Gastrocnemius medialis (tissue), 4 donors: ENCODE measurements at regions of chr10 and their contacts with region 1.

Region 1: DNA sequence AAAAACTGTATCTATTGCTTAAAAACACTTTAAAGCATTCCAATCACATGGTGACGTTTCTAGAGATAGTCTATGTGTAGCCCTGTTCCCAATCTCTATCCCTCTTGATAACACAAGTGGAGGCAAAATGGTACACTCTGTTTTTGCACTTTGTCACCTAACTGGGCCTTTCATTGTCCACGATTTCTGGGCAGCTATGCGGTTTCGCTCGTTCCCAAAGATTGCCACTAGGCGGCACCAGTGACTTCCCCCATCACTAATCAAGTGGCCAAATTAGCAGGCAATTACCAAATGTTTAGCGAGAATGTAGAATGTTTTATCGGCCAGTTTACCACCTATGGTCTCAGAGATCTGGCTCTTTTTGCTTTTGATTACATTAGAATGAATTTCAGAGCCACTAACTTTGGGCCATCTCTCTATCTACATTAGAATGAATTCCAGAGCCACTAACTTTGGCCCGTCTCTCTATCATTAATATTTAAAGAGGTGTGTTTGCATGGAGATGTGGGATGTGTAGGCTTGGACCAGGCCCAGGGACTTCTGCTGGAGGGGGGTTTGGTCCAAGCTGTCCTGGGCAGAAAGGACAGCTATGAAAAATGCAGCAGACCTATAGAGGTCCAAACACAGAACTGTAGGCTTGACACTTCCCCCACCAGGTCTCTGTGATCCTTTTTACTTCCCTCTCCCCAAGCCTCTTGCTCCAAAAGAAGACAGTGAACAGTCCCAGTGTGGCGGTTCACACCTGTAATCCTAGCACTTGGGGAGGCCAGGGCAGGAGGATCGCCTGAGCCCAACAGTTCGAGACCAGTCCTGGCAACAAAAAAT is 90.1 kb downstream of the EPC1 start:
- DNase-seq: peak; percentile 23 to 33
- ATAC-seq: peak; percentile 66 to 77
- H3K4me3 ChIP-seq: no peak overlapping the region
- H3K27ac ChIP-seq: no peak overlapping the region
- H3K4me1 ChIP-seq: no peaks in the 10 kb centered on the region
- H3K27me3 ChIP-seq: no peaks in the 10 kb centered on the region
- CTCF ChIP-seq: peak; percentile 77 to 88 (median 84)
- POLR2A ChIP-seq: no peak

Region 2: DNA sequence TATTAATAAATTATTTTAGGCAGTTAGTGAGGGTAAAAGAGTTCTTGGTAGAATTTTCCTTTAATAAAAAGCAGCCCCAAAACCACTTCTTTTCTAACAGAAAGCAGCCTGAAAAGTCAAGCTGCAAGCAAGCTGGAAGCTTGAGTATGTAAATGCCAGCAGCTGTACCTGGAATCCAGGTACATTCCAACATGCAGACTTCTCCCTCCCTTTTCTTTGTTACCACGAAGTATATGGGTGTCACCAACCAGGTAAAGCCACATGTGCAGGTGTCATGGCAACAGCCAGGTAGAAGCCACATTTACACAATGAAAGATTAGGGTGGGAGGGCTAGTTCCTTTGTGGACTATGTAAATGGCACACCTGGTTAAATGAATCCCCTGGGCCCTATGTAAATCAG is 24.4 kb before region 1 on chr10:
- in situ Hi-C with region 1: no loop called
- intact Hi-C with region 1: no loop called
- DNase-seq: no peak
- ATAC-seq: no peak
- H3K4me3 ChIP-seq: no peak overlapping the region
- H3K27ac ChIP-seq: no peak overlapping the region
- H3K4me1 ChIP-seq: no peaks in the 10 kb centered on the region
- H3K27me3 ChIP-seq: no peaks in the 10 kb centered on the region
- CTCF ChIP-seq: no peak
- POLR2A ChIP-seq: no peak

Region 3: GRCh38 chr10:32244421-32245207 is 12.2 kb before region 1 on chr10:
- in situ Hi-C with region 1: no loop called
- intact Hi-C with region 1: no loop called
- DNase-seq: no peak
- ATAC-seq: no peak
- H3K4me3 ChIP-seq: no peak overlapping the region
- H3K27ac ChIP-seq: no peak overlapping the region
- H3K4me1 ChIP-seq: no peaks in the 10 kb centered on the region
- H3K27me3 ChIP-seq: no peaks in the 10 kb centered on the region
- CTCF ChIP-seq: no peak
- POLR2A ChIP-seq: no peak

Region 4: DNA sequence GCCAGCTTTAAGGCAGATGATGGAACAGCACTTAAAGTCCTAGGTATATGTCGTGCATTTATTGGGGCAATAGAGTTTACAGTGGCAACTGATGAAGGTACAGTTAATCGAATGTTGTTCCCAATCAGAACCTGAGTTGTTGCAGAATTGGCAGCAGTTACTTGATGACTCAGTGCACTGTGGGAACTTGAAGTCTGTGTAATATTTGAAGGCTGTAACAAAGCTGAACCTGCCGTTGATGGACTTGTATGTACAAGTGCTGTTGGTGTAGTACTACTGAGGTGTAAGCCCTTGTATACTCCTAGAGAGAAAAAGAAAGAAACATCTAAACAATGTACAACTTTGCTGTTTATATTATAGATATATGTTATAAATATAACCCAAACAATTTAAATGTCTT is 14.8 kb after region 1 on chr10:
- in situ Hi-C with region 1: no loop called
- intact Hi-C with region 1: no loop called
- DNase-seq: no peak
- ATAC-seq: peak in 1 of 2 donors; percentile 36
- H3K4me3 ChIP-seq: no peak overlapping the region
- H3K27ac ChIP-seq: no peak overlapping the region
- H3K4me1 ChIP-seq: no peaks in the 10 kb centered on the region
- H3K27me3 ChIP-seq: no peaks in the 10 kb centered on the region
- CTCF ChIP-seq: no peak
- POLR2A ChIP-seq: no peak

Region 5: GRCh38 chr10:32338262-32338661 is 81.4 kb after region 1 on chr10:
- in situ Hi-C with region 1: loop called in 2 of 4 experiments (anchors 5 to 10 kb)
- intact Hi-C with region 1: no loop called
- DNase-seq: no peak
- ATAC-seq: no peak
- H3K4me3 ChIP-seq: peak overlapping the region in 1 of 4 donors; percentile 1
- H3K27ac ChIP-seq: peak overlapping the region in 2 of 4 donors; percentile 36 to 55
- H3K4me1 ChIP-seq: peaks cover 92 to 94% of the 10 kb centered on the region in 2 donors
- H3K27me3 ChIP-seq: no peaks in the 10 kb centered on the region
- CTCF ChIP-seq: no peak
- POLR2A ChIP-seq: no peak

Region 6: DNA sequence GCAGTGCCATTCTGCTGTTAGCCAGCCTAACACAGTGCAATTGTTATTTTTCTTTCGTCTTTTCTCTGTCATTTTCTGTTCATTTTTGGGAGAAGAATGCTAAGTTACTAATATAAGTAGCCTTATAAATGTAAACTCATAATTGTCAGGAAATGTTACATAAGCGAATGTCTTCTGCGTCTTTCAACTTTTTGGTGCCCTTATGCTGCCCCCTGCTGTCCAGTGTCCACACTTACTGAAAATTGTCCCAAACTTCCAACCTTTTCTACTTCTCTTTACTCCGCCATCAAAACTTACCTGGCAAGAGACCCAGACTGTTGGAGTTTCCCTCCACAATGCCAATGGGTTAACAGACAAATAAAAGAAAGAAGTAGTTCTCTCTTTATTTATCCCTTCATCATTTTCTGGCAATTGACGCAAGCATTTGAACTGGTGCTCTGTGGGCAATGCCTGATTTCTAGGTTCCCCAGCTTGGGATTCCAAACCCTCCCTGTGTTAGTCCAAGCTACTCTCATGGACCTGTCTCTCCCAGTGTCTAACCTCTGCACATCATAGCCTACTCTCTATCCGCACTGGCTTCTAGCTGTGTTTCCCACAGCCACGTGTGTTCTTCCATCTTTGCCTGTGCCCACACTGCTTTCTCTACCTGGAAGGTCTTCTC is 111.1 kb after region 1 on chr10:
- in situ Hi-C with region 1: loop called in 3 of 4 experiments (anchors 5 to 10 kb)
- intact Hi-C with region 1: loop called (anchors 1 kb)
- DNase-seq: peak; percentile 41 to 56
- ATAC-seq: peak; percentile 69 to 71
- H3K4me3 ChIP-seq: peak overlapping the region; percentile 23 to 40 (median 26)
- H3K27ac ChIP-seq: peak overlapping the region; percentile 43 to 88 (median 51)
- H3K4me1 ChIP-seq: peaks cover 34 to 41% of the 10 kb centered on the region in 2 donors
- H3K27me3 ChIP-seq: no peaks in the 10 kb centered on the region
- CTCF ChIP-seq: peak; percentile 76 to 82 (median 81)
- POLR2A ChIP-seq: no peak

Region 7: DNA sequence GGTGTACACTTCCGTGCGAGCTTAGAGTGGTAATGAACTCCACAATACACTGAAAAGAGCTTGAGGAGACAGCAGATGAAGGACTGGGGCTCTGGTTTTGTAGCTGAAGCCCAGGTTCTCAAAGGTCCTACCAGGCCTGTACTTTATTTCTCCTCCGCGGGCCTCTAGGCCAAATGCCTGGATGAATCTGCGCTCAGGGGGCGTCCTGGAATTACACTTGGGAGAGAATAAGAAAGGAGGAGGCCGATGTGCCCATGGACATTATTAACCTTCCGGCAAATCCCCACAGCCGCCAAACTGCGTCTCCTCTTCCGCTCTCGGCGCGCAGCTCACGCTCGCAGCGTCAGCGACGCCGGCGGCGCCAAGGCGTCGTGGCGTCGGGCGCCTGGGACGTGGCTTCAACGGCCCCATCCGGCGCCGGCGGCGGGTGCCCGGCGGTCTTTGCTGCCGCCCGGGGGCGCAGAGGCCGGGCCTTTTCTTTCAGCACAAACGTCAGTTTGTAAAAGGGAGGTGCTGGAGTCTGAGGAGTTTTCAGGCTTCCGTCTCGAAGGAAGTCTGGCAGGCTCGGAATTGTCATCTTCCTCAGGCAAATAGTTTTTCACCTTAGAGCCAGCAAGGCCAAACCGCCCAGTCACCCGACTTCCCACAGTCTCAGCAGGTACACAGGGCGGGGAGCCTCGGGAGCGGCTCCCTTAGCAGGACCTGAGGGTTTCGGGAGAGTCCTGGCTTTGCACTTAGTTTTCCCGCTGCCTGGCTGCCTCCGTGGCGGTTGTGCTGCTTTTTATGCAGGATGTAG is 189.1 kb after region 1 on chr10 and contains the start of gene CCDC7:
- in situ Hi-C with region 1: no loop called
- intact Hi-C with region 1: loop called (anchors 2 kb)
- DNase-seq: peak; percentile 57 to 76
- ATAC-seq: peak; percentile 93 to 95
- H3K4me3 ChIP-seq: peak within 1 kb of the TSS; percentile 67 to 99 (median 80)
- H3K27ac ChIP-seq: peak within 1 kb of the TSS; percentile 84 to 99 (median 90)
- H3K4me1 ChIP-seq: peaks cover 9 to 11% of the 10 kb centered on the region in 2 donors
- H3K27me3 ChIP-seq: no peaks in the 10 kb centered on the region
- CTCF ChIP-seq: peak; percentile 31 to 64 (median 38)
- POLR2A ChIP-seq: peak; percentile 54 to 67
- total RNA-seq, gene CCDC7: 4.6 to 12.9 (median 5.9) TPM